Endothelial cell of umbilical vein (primary cell): ENCODE measurements at regions of chr13 and their contacts with region 1.

Region 1: GRCh38 chr13:55869648-55870047 is 1271.1 kb upstream of the PRR20A start:
- DNase-seq: no peak
- H3K4me3 ChIP-seq: no peak overlapping the region
- H3K27ac ChIP-seq: no peak overlapping the region
- H3K4me1 ChIP-seq: no peaks in the 10 kb centered on the region
- H3K27me3 ChIP-seq: no peaks in the 10 kb centered on the region
- CTCF ChIP-seq: no peak
- POLR2A ChIP-seq: no peak

Region 2: GRCh38 chr13:54305377-54305776 is 1564.3 kb before region 1 on chr13:
- CTCF ChIA-PET with region 1: no interaction called
- POLR2A ChIA-PET with region 1: no interaction called
- dilution Hi-C with region 1: no loop called
- intact Hi-C with region 1: loop called (anchors 10 kb)
- DNase-seq: no peak
- H3K4me3 ChIP-seq: no peak overlapping the region
- H3K27ac ChIP-seq: no peak overlapping the region
- H3K4me1 ChIP-seq: no peaks in the 10 kb centered on the region
- H3K27me3 ChIP-seq: no peaks in the 10 kb centered on the region
- CTCF ChIP-seq: no peak
- POLR2A ChIP-seq: no peak

Region 3: DNA sequence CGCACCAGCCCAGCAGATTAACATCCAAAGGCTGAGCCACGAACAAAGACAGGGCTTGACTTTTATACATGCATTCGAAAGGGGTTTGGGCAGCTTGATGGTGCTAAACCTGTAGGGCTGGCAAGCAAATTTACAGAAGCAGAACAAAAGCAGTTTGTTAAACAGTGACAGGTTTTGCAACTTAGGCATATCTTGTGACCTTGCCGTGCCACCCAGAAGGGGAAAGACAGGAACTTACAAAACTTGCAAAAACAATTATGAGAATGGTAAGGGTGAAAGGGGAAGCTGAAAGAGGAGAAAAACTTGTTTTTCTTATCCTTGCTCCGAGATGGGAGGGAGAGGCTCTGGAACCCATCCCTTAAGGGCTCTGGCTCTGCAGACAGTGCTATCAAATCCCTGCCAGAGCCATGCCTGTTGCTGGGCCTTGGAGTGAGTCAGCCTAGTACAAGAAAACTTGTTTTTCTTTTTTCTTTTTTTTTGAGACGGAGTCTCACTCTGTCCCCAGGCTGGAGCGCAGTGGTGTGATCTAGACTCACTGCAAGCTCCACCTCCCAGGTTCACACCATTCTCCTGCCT is 54.1 kb before region 1 on chr13:
- CTCF ChIA-PET with region 1: no interaction called
- POLR2A ChIA-PET with region 1: no interaction called
- dilution Hi-C with region 1: no loop called
- intact Hi-C with region 1: no loop called
- DNase-seq: no peak
- H3K4me3 ChIP-seq: no peak overlapping the region
- H3K27ac ChIP-seq: no peak overlapping the region
- H3K4me1 ChIP-seq: no peaks in the 10 kb centered on the region
- H3K27me3 ChIP-seq: no peaks in the 10 kb centered on the region
- CTCF ChIP-seq: no peak
- POLR2A ChIP-seq: no peak